Activated CD8-positive, alpha-beta T cell treated with anti-CD3 and anti-CD28 coated beads, Interleukin-2, amount 10 ng/mL, durations not matched to agents 7 days and 5 days (primary cell): ENCODE measurements at regions of chr17 and their contacts with region 1.

Region 1: DNA sequence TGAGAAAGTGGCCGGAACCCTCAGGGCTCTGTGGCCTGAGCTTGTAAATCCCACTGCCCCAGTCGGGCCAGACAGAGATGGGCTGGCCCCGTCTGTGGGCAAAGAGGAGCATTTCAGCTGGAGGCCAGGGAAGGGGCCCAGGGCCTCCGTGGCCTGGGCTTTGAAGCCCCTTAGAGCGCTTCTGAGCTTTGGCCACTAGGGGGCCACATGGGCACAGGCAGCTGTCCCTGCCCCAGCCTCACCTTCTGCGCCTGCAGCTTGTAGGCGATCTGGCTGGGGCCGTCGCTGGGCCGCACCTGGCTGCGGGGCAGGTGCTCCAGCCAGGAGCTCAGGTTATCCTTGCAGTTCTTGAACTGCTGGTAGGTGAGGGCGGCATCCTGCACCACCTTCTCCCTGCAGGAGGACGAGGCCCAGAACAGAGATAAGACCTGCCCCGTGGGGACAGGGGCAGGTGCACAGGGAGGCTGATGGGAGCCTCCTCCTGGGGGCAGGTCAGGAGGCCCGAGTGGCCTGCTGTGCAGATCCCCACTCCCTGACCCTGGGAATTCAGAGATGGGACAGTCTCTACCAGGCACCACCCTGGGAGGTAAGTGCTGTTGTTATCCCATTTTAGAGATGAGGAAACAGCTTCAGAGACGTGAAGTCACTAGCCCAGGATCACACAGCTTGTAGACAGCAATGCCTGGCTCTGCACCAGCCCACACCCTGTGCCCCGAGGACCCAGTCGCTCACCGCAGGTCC is 12.8 kb downstream of the EVPL start:
- DNase-seq: peak; percentile 84
- ATAC-seq: peak; percentile 99
- H3K4me3 Mint-ChIP-seq: no peak overlapping the region
- H3K27ac Mint-ChIP-seq: no peak overlapping the region
- H3K4me1 Mint-ChIP-seq: peaks cover 8% of the 10 kb centered on the region
- H3K27me3 Mint-ChIP-seq: no peaks in the 10 kb centered on the region

Region 2: DNA sequence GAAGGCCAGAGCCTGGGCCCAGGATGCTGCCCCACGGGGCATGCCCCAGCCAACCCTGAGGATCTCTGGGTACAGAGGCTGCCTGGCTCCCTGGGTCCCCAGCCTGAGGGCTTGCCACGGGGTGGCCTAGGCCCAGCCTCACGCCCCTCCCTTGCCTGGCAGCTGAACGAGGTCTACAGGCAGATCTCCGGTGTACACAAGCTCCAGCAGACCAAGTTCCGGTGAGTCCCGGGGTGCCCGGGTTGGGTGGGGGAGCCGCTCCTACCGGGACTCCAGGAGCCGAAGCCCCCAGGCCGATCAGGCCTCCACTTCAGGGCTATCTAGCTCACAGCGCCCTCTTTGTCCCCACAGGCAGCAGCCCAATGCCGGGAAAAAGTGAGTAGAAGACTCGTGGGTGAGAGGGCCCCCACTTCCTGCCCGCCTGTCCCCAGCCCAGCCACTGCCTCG is 273.7 kb before region 1 on chr17:
- CTCF ChIA-PET with region 1: no interaction called
- POLR2A ChIA-PET with region 1: no interaction called
- DNase-seq: no peak
- ATAC-seq: no peak
- H3K4me3 Mint-ChIP-seq: no peak overlapping the region
- H3K27ac Mint-ChIP-seq: no peak overlapping the region
- H3K4me1 Mint-ChIP-seq: peaks cover 11% of the 10 kb centered on the region
- H3K27me3 Mint-ChIP-seq: no peaks in the 10 kb centered on the region

Region 3: GRCh38 chr17:75904749-75905521 is 109.4 kb before region 1 on chr17 and contains the start of gene MRPL38:
- CTCF ChIA-PET with region 1: interaction called, 16 read pairs
- POLR2A ChIA-PET with region 1: no interaction called
- DNase-seq: peak; percentile 96
- ATAC-seq: peak; percentile 99
- H3K4me3 Mint-ChIP-seq: peak within 1 kb of the TSS; percentile 94
- H3K27ac Mint-ChIP-seq: peak within 1 kb of the TSS; percentile 90
- H3K4me1 Mint-ChIP-seq: peaks cover 25% of the 10 kb centered on the region
- H3K27me3 Mint-ChIP-seq: no peaks in the 10 kb centered on the region
- total RNA-seq, gene MRPL38: 89.0 to 113 TPM

Region 4: DNA sequence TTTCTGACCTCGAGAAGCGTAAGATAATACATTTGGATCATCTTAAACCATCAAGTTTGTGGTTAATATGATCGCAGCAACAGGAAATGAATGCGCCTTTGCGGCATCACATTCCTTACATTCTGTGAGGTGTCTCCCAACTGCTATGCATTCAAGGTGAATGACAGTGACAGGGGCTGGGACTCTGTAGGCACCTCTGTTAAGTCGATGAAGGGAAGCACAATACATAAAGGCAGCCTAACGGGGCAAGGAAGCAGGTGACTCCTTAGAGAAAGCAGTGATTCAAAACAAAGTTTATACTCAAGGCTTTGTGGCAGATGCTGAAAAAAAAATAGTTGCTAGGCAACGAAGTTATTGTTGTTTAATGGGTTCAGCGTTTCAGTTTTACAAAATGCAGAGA is 34.4 kb after region 1 on chr17:
- CTCF ChIA-PET with region 1: interaction called, 22 read pairs
- POLR2A ChIA-PET with region 1: no interaction called
- DNase-seq: no peak
- ATAC-seq: peak; percentile 23
- H3K4me3 Mint-ChIP-seq: no peak overlapping the region
- H3K27ac Mint-ChIP-seq: no peak overlapping the region
- H3K4me1 Mint-ChIP-seq: peaks cover 4% of the 10 kb centered on the region
- H3K27me3 Mint-ChIP-seq: no peaks in the 10 kb centered on the region

Region 5: DNA sequence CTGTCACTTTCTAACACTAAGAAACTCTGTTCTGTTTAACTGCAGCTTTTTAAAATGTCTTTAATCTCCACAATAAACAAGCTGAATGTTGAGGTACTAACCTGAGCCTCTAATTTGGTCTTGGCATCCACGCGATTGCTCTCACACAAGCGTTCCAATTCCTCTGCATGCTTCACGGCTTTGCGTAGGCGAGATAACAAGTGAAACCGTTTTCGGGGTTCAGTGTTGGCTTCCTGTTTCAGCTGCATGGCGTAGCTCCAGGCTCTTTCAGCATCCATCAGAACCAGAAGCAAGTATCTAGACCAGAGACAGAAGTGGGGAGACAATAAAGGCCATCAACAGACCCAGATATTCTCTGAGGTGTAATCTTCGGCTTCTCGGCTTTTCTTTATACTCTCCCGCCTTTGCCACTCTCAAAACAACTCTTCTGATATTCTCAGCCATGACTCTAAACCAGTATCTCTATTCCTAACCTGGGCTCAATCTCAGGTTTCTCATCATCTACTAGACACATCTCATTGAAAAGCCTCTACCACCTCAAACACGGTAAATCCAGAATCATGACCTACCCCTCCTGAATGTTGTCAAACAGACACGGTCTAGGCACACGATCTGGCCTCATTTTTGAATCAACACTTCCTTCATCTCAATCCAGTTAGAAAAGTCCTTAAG is 49.7 kb after region 1 on chr17:
- CTCF ChIA-PET with region 1: interaction called, 30 read pairs
- POLR2A ChIA-PET with region 1: no interaction called
- DNase-seq: no peak
- ATAC-seq: no peak
- H3K4me3 Mint-ChIP-seq: no peak overlapping the region
- H3K27ac Mint-ChIP-seq: peak overlapping the region; percentile 26
- H3K4me1 Mint-ChIP-seq: peaks cover 9% of the 10 kb centered on the region
- H3K27me3 Mint-ChIP-seq: no peaks in the 10 kb centered on the region

Region 6: GRCh38 chr17:76103274-76104139 is 89.2 kb after region 1 on chr17 and contains the start of gene EXOC7:
- CTCF ChIA-PET with region 1: interaction called, 12 read pairs
- POLR2A ChIA-PET with region 1: interaction called, 3 read pairs
- DNase-seq: peak; percentile 94
- ATAC-seq: peak; percentile 90
- H3K4me3 Mint-ChIP-seq: peak within 1 kb of the TSS; percentile 97
- H3K27ac Mint-ChIP-seq: peak within 1 kb of the TSS; percentile 98
- H3K4me1 Mint-ChIP-seq: peaks cover 30% of the 10 kb centered on the region
- H3K27me3 Mint-ChIP-seq: no peaks in the 10 kb centered on the region
- total RNA-seq, gene EXOC7: 126 to 129 TPM

Region 7: GRCh38 chr17:76196675-76197074 is 182.3 kb after region 1 on chr17:
- CTCF ChIA-PET with region 1: no interaction called
- POLR2A ChIA-PET with region 1: no interaction called
- DNase-seq: no peak
- ATAC-seq: no peak
- H3K4me3 Mint-ChIP-seq: no peak overlapping the region
- H3K27ac Mint-ChIP-seq: no peak overlapping the region
- H3K4me1 Mint-ChIP-seq: peaks cover 91% of the 10 kb centered on the region
- H3K27me3 Mint-ChIP-seq: no peaks in the 10 kb centered on the region

Region 8: GRCh38 chr17:76296186-76296585 is 281.8 kb after region 1 on chr17:
- CTCF ChIA-PET with region 1: interaction called, 28 read pairs
- POLR2A ChIA-PET with region 1: no interaction called
- DNase-seq: no peak
- ATAC-seq: no peak
- H3K4me3 Mint-ChIP-seq: no peak overlapping the region
- H3K27ac Mint-ChIP-seq: no peak overlapping the region
- H3K4me1 Mint-ChIP-seq: peaks cover 4% of the 10 kb centered on the region
- H3K27me3 Mint-ChIP-seq: no peaks in the 10 kb centered on the region

Region 9: DNA sequence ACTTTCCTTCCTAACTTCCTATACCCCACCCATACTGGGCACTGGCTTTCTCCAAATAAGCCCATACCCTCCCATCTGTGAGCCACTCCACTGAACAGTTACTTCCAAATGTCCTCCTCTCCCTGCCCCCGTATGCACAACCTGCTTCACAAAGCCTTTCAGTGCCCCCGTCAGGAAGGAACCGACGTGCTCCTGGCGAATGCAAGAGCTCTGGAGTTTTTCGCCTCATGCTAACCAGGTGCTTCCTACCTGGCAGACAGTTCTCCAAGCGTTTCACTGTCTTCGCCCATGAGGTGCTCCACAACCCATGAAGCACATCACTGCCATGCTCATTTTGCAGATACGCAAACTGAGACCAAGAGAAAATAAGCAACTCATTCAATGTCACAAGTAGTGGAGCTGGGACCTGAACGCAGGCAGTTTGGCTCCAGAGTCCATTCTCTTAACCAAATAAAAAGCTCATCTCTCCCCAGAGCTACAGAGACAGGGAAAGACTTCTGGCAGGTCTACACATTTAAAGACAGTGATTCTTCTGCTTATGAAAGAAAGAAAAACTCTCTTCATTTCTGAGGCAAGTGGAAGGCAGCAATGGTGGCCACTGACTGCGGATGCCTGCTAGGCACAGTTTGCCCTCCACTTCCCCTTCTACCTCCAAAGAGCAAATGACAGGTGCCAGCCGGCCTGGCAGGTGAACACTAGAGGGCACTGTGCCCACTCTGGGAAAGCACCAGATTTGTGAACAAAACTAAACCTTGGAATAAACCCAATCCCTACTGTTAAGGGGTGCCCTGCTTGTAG is 393.9 kb after region 1 on chr17:
- CTCF ChIA-PET with region 1: no interaction called
- POLR2A ChIA-PET with region 1: no interaction called
- DNase-seq: peak; percentile 81
- ATAC-seq: peak; percentile 84
- H3K4me3 Mint-ChIP-seq: no peak overlapping the region
- H3K27ac Mint-ChIP-seq: peak overlapping the region; percentile 39
- H3K4me1 Mint-ChIP-seq: peaks cover 13% of the 10 kb centered on the region
- H3K27me3 Mint-ChIP-seq: no peaks in the 10 kb centered on the region